ENCODE measurements at regions of chr10 and their contacts with region 1.

Region 1: DNA sequence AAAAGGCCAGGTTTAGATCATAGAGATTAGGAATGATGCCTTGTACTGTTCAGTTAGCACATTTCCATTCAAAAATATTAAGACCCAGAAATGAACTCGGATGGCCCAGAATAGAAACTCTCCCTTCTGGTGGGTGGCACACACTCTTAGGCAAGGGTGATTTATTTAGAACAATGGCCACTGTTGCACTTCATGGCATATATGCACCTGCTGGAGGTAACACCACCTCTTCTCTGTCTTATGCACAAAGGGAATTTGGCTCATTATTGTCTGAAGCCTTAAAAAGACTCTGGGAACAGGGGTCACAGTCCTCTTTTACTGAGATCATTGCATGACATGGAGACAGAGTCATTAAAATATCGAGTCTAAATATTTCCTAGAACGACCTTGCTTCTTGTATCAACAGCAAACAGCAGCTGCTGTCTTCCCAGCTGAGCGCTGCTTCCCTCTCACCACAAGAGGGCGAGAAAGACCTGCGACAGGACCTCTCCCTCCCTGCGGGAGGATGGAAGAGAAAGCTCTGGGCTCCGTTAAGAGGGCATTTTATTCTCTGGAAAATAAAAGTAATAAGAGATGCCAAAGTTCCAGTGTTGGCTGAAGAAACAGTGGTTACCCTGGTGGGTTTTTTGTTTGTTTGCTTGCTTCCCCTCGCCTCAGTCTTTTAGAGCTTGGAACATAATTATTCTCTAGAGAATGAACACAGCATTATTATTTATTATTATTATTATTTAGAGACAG is 13.6 kb upstream of the BAMBI start:
- DNase-seq: peak; percentile 80
- H3K4me3 Mint-ChIP-seq: no peak overlapping the region
- H3K27ac Mint-ChIP-seq: no peak overlapping the region
- H3K4me1 Mint-ChIP-seq: peaks cover 7% of the 10 kb centered on the region
- H3K27me3 Mint-ChIP-seq: peaks cover 37% of the 10 kb centered on the region

Region 2: GRCh38 chr10:28628184-28628893 is 35.4 kb before region 1 on chr10:
- CTCF ChIA-PET with region 1: interaction called, 12 read pairs
- POLR2A ChIA-PET with region 1: no interaction called
- intact Hi-C with region 1: loop called (anchors 1 kb)
- DNase-seq: peak; percentile 80
- H3K4me3 Mint-ChIP-seq: no peak overlapping the region
- H3K27ac Mint-ChIP-seq: no peak overlapping the region
- H3K4me1 Mint-ChIP-seq: peaks cover 4% of the 10 kb centered on the region
- H3K27me3 Mint-ChIP-seq: peaks cover 9% of the 10 kb centered on the region

Region 3: DNA sequence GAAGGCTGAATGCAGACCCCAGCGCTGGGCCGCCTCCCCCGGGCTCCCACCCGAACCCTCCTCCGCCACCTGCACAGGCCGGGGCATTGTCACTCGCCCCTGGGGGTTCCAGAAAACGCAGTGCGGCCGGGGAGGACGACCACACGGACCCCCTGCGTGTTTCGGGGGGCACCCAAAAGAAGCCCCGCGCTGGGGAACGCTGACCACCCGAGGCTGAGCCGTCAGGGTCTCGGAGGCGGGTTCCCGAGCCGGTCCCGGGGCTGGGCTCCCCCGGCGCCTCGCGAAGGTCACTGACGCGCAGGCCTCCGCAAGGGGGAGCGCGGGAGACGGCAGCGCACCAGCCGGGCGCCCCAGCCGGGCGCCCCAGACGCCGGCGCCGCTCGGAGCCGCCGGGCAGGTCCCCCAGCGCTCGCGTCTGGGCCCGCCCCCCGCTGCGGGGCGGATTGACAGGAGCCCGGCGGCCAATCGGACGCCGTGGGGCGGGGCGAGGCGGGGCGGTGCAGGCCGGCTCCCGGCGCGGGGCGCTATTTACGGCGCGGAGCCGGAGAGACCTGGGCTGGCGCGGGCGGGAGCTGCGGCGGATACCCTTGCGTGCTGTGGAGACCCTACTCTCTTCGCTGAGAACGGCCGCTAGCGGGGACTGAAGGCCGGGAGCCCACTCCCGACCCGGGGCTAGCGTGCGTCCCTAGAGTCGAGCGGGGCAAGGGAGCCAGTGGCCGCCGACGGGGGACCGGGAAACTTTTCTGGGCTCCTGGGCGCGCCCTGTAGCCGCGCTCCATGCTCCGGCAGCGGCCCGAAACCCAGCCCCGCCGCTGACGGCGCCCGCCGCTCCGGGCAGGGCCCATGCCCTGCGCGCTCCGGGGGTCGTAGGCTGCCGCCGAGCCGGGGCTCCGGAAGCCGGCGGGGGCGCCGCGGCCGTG is 13.5 kb after region 1 on chr10 and contains the start of gene BAMBI:
- CTCF ChIA-PET with region 1: interaction called, 10 read pairs
- POLR2A ChIA-PET with region 1: no interaction called
- intact Hi-C with region 1: loop called (anchors 1 kb)
- DNase-seq: peak; percentile 91
- H3K4me3 Mint-ChIP-seq: peak within 1 kb of the TSS; percentile 71
- H3K27ac Mint-ChIP-seq: no peak within 1 kb of the TSS
- H3K4me1 Mint-ChIP-seq: peaks cover 26% of the 10 kb centered on the region
- H3K27me3 Mint-ChIP-seq: peaks cover 48% of the 10 kb centered on the region
- total RNA-seq, gene BAMBI: 0.31 to 0.33 TPM

Region 4: DNA sequence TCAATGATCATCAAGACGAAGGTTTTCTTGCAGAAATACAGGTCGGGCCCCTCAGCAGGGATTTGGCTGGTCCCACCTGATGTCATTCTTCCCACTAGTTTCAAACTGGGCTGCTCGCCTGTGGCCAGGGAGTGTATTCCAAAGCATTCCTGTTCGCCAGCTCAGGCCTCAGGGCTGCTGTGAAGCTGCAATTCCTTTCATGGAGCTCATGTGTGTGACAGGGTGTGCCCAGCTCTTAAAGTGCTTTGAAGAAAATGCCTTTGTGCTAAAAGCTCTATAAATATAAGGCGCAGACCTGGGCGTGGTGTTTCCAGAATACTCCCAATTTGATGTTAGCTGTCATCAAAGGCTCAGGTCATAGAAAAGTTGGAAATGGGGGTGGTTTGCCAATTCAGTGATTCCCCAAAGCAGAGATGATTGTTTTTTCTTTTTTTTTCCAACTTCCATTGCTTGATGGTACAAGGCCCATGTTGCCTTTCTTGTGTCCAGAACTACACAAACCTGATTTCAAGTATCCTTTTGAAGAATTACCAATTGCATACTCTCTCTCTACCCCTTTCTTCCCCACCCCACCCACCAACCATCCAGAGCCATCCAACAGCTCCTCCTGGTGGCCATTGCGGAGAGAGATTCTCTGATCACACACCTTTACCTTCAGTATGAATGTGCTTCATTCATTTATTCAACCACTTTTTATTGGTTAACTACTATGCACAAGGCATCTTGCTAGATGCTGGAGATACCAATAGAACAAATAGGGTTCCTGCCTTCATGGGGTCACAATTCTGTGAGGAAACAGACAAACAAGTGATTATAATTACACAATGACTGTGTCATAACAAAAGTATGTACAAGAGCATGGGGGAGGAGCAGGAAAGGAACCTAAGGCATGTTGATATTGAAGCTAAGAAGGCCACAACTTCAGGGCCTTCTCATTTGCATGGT is 327.9 kb after region 1 on chr10:
- CTCF ChIA-PET with region 1: interaction called, 49 read pairs
- POLR2A ChIA-PET with region 1: no interaction called
- intact Hi-C with region 1: loop called (anchors 2 kb)
- DNase-seq: peak; percentile 50
- H3K4me3 Mint-ChIP-seq: no peak overlapping the region
- H3K27ac Mint-ChIP-seq: no peak overlapping the region
- H3K4me1 Mint-ChIP-seq: peaks cover 4% of the 10 kb centered on the region
- H3K27me3 Mint-ChIP-seq: peaks cover 1% of the 10 kb centered on the region

Region 5: DNA sequence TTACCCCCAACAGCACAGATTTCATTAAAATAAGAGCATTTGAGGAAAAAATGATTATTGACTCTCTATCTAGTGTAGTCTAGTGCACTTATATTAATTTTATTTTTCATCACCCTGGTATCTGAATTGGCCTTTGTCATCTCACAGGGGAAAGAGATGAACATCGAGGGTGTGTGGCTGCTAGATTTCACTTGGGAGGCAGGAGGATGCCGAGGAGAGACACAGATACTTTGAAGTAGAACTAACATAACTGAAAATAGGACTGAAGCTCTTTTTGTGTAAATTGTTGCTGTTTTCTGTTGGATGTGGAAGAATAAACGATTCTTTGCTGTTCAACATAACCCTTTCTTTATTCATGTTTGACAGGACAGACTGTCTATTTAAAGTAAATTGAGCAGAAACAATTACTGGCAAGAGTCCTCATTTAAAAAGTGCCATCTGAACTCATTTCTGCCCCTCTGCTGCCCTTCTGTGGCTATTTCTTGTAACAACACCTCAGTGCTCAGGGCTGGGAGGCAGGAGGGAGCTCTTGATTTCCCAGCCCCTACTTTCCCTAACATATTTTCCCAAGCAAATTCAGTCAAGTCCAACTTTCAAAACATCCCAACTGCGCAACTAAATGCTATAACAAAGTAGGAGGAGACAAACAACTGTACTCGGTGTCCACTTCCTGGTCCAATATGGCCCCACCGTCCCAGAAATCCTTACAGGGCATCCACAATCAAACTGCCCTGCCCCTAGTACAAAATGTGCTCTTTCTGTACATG is 640.7 kb after region 1 on chr10:
- CTCF ChIA-PET with region 1: interaction called, 48 read pairs
- POLR2A ChIA-PET with region 1: no interaction called
- intact Hi-C with region 1: loop called (anchors 5 kb)
- DNase-seq: peak; percentile 43
- H3K4me3 Mint-ChIP-seq: no peak overlapping the region
- H3K27ac Mint-ChIP-seq: no peak overlapping the region
- H3K4me1 Mint-ChIP-seq: no peaks in the 10 kb centered on the region
- H3K27me3 Mint-ChIP-seq: peaks cover 21% of the 10 kb centered on the region

Measured in activated CD4-positive, alpha-beta memory T cell treated with anti-CD3 and anti-CD28 coated beads for 36 hours (primary cell).